Activated CD4-positive, alpha-beta T cell treated with anti-CD3 and anti-CD28 coated beads for 36 hours (primary cell): ENCODE measurements at regions of chr7 and their contacts with region 1.

Region 1: DNA sequence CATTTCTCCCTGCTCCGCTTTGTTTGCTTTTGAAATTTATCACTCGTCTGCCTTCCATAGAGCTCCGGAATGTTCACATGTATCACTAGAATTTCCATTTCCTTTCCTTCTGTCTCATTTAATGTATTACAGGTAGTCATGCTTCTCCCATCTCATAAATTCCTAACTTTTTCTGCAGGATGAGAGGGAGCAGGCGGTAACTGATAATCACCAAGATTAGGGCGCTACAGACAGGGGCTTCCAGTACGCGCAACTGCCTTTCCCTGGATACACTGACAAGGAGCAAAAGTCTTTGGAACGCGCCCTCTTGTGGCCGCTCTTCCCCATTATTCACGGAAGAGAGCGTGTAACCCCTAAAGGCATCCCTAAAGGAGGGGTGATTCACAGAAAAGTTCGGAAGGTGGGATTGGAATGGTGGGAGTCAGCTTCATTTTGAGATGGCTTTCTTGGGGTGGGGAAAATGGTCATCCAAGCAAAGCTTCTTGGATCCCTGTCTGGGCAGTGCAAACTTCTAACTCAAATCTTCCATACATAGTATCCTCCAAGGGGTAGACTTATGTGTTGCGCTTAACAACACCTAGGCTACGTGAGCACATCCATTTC is 6.5 kb downstream of the INHBA start:
- DNase-seq: peak; percentile 60
- ATAC-seq: no peak
- H3K4me3 Mint-ChIP-seq: no peak overlapping the region
- H3K27ac Mint-ChIP-seq: no peak overlapping the region
- H3K4me1 Mint-ChIP-seq: peaks cover 3% of the 10 kb centered on the region
- H3K27me3 Mint-ChIP-seq: peaks cover 36% of the 10 kb centered on the region

Region 2: GRCh38 chr7:40329601-40330153 is 1366.7 kb before region 1 on chr7:
- CTCF ChIA-PET with region 1: no interaction called
- POLR2A ChIA-PET with region 1: no interaction called
- intact Hi-C with region 1: loop called in 1 of 2 experiments (anchors 5 kb)
- DNase-seq: no peak
- ATAC-seq: no peak
- H3K4me3 Mint-ChIP-seq: no peak overlapping the region
- H3K27ac Mint-ChIP-seq: no peak overlapping the region
- H3K4me1 Mint-ChIP-seq: no peaks in the 10 kb centered on the region
- H3K27me3 Mint-ChIP-seq: no peaks in the 10 kb centered on the region

Region 3: DNA sequence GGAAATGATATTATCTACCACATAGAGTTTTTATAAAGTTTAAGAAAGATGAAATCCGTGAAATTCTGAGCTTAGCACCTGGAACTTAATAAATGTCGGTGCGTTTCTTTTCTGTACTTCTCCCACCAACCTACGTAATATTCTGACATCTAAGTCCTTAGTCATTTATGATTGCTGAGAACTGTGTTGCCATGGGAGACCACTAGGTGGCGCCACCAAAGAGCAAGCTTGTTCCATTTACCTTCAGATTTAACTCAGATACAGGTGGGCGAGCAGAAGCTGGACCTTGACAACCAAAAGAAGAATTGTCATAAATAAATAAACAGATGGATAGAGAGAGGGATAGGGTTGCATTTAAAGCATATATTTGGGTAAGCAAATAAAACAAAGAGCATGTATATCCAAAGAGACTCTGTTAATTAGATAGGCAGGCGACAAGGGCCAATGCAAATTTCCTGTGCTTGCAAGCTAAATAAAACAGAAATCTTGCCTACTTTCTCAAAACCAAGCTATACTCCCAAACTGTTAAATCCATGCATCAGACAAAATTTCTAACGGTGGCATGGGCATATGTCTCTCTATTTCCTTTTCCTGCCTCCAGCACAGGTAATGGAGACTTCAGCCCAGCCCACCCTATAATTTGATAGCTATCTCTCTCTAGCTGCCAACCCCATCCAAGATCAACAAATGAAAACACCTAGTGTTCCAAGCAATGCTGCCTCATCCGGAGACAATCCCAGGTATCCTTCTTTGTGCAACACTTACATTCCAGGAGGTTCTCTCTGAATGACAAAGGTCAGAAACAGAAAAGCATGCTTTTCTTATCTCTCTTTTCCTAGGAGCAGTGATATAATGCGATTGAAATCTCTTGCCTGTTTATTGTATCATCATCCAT is 693.1 kb before region 1 on chr7:
- CTCF ChIA-PET with region 1: no interaction called
- POLR2A ChIA-PET with region 1: no interaction called
- intact Hi-C with region 1: loop called in 1 of 2 experiments (anchors 5 kb)
- DNase-seq: peak; percentile 71
- ATAC-seq: no peak
- H3K4me3 Mint-ChIP-seq: no peak overlapping the region
- H3K27ac Mint-ChIP-seq: no peak overlapping the region
- H3K4me1 Mint-ChIP-seq: no peaks in the 10 kb centered on the region
- H3K27me3 Mint-ChIP-seq: no peaks in the 10 kb centered on the region